Tibial artery (tissue), 4 donors: ENCODE measurements at regions of chr11 and their contacts with region 1.

Region 1: DNA sequence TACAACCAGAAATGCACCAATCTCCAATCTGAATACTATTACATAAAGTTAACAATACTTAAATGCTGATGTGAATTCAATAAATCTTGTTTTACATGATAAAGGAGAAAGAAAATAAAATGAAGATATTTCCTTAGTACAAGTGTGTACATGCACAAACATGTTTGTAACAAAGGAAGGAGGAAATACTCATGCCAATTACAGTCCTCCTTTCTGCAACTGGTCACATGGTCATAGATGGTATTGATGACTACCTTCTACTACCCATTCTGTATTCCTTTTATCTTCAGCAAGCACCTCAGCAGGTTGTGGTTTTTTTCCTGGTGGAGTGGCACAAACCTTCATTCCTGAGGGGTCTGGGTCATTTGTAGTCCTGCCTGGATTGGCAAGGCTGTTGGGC is 214.2 kb upstream of the GUCY1A2 start:
- DNase-seq: no peak
- H3K4me3 ChIP-seq: no peak overlapping the region
- H3K27ac ChIP-seq: no peak overlapping the region
- H3K4me1 ChIP-seq: no peaks in the 10 kb centered on the region
- H3K27me3 ChIP-seq: no peaks in the 10 kb centered on the region
- CTCF ChIP-seq: no peak

Region 2: GRCh38 chr11:106031202-106031810 is 1201.1 kb before region 1 on chr11:
- intact Hi-C with region 1: loop called (anchors 5 kb)
- DNase-seq: no peak
- H3K4me3 ChIP-seq: no peak overlapping the region
- H3K27ac ChIP-seq: no peak overlapping the region
- H3K4me1 ChIP-seq: no peaks in the 10 kb centered on the region
- H3K27me3 ChIP-seq: no peaks in the 10 kb centered on the region
- CTCF ChIP-seq: no peak